CD4-positive, alpha-beta memory T cell (primary cell): ENCODE measurements at regions of chr15 and their contacts with region 1.

Region 1: GRCh38 chr15:63188926-63189871 is at the start of gene RAB8B:
- DNase-seq: peak; percentile 92 to 96 (median 93)
- H3K4me3 ChIP-seq: peak within 1 kb of the TSS; percentile 75 to 80
- H3K4me3 Mint-ChIP-seq: peak within 1 kb of the TSS; percentile 95 to 99 (median 98)
- H3K27ac ChIP-seq: peak within 1 kb of the TSS; percentile 93
- H3K27ac Mint-ChIP-seq: peak within 1 kb of the TSS; percentile 87 to 100 (median 98)
- H3K4me1 ChIP-seq: peaks cover 44% of the 10 kb centered on the region
- H3K4me1 Mint-ChIP-seq: peaks cover 37 to 56% (median 44%) of the 10 kb centered on the region in 4 donors
- H3K27me3 ChIP-seq: no peaks in the 10 kb centered on the region
- H3K27me3 Mint-ChIP-seq: no peaks in the 10 kb centered on the region
- total RNA-seq, gene RAB8B: 86.0 to 86.4 TPM

Region 2: GRCh38 chr15:63121382-63122001 is 67.7 kb before region 1 on chr15 and contains the start of gene LACTB:
- CTCF ChIA-PET with region 1: no interaction called
- POLR2A ChIA-PET with region 1: no interaction called
- intact Hi-C with region 1: loop called (anchors 1 kb)
- DNase-seq: peak; percentile 73 to 79 (median 77)
- H3K4me3 ChIP-seq: peak within 1 kb of the TSS; percentile 69 to 76
- H3K4me3 Mint-ChIP-seq: peak within 1 kb of the TSS; percentile 87 to 98 (median 93)
- H3K27ac ChIP-seq: peak within 1 kb of the TSS; percentile 67
- H3K27ac Mint-ChIP-seq: peak within 1 kb of the TSS; percentile 84 to 96 (median 94)
- H3K4me1 ChIP-seq: peaks cover 10% of the 10 kb centered on the region
- H3K4me1 Mint-ChIP-seq: peaks cover 7 to 28% (median 14%) of the 10 kb centered on the region in 4 donors
- H3K27me3 ChIP-seq: no peaks in the 10 kb centered on the region
- H3K27me3 Mint-ChIP-seq: no peaks in the 10 kb centered on the region
- total RNA-seq, gene LACTB: 11.7 to 12.1 TPM

Region 3: GRCh38 chr15:63166219-63166618 is 23.0 kb before region 1 on chr15:
- CTCF ChIA-PET with region 1: interaction called, 26 read pairs
- POLR2A ChIA-PET with region 1: interaction called, 16 read pairs
- intact Hi-C with region 1: no loop called
- DNase-seq: peak in 1 of 5 donors; percentile 6
- H3K4me3 ChIP-seq: no peak overlapping the region
- H3K4me3 Mint-ChIP-seq: no peak overlapping the region
- H3K27ac ChIP-seq: no peak overlapping the region
- H3K27ac Mint-ChIP-seq: no peak overlapping the region
- H3K4me1 ChIP-seq: no peaks in the 10 kb centered on the region
- H3K4me1 Mint-ChIP-seq: peaks cover 0 to 5% (median 3%) of the 10 kb centered on the region in 4 donors
- H3K27me3 ChIP-seq: no peaks in the 10 kb centered on the region
- H3K27me3 Mint-ChIP-seq: no peaks in the 10 kb centered on the region

Region 4: DNA sequence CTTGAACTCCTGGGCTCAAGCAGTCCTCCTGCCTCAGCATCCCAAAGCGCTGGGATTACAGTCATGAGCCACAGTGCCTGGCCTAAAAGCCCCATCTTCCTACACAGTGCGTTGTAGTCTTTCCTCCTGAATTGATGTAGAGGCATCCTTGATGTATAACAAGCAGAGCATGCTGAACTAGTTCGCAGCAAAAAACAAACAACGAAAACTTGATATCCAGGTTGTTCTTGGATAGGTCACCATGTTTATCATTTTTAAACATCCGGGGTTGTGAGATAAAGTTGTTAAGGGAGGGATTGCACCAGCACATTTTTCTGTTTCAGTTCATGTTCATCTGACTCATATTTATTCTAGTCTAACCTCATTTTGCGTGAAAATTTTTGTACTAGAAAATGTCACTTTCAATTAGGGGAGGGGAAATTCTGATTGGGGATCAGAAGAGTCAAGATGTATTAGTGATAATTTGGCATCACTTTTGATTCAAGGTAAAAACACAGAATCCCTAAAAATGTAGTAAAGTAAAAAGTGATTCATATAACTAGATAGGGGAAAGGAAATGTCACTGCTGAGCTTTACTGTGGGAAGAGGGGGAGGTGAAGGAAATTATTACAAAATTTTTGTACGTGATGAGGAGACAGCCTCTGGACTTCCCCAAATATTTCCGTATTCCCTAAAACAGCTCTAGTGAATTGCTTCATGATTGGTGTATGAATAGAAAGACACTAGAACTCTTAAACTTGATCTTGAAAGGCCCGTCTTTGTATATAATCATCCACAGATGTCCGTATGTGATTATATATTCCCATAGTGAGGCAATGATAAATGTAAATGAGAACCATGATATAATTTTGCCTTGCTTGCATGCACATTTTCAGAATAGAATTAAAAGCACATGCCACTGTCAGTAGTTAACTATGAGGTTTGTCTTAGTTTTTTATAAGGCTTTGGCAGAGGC is 23.1 kb after region 1 on chr15:
- CTCF ChIA-PET with region 1: interaction called, 9 read pairs
- POLR2A ChIA-PET with region 1: interaction called, 59 read pairs
- intact Hi-C with region 1: loop called (anchors 1 kb)
- DNase-seq: peak in 3 of 5 donors; percentile 24 to 38 (median 33)
- H3K4me3 ChIP-seq: no peak overlapping the region
- H3K4me3 Mint-ChIP-seq: peak overlapping the region; percentile 29 to 87 (median 72)
- H3K27ac ChIP-seq: peak overlapping the region; percentile 26
- H3K27ac Mint-ChIP-seq: peak overlapping the region; percentile 67 to 92 (median 88)
- H3K4me1 ChIP-seq: peaks cover 78% of the 10 kb centered on the region
- H3K4me1 Mint-ChIP-seq: peaks cover 59 to 82% (median 69%) of the 10 kb centered on the region in 4 donors
- H3K27me3 ChIP-seq: no peaks in the 10 kb centered on the region
- H3K27me3 Mint-ChIP-seq: no peaks in the 10 kb centered on the region

Region 5: GRCh38 chr15:63246691-63247464 is 57.7 kb after region 1 on chr15:
- CTCF ChIA-PET with region 1: interaction called, 10 read pairs
- POLR2A ChIA-PET with region 1: interaction called, 21 read pairs
- intact Hi-C with region 1: loop called (anchors 2 kb)
- DNase-seq: no peak
- H3K4me3 ChIP-seq: no peak overlapping the region
- H3K4me3 Mint-ChIP-seq: peak overlapping the region in 1 of 8 donors; percentile 25
- H3K27ac ChIP-seq: no peak overlapping the region
- H3K27ac Mint-ChIP-seq: peak overlapping the region in 6 of 7 donors; percentile 22 to 73 (median 63)
- H3K4me1 ChIP-seq: peaks cover 26% of the 10 kb centered on the region
- H3K4me1 Mint-ChIP-seq: peaks cover 36 to 67% (median 48%) of the 10 kb centered on the region in 4 donors
- H3K27me3 ChIP-seq: no peaks in the 10 kb centered on the region
- H3K27me3 Mint-ChIP-seq: no peaks in the 10 kb centered on the region

Region 6: GRCh38 chr15:63402498-63403253 is 213.5 kb after region 1 on chr15:
- CTCF ChIA-PET with region 1: interaction called, 8 read pairs
- POLR2A ChIA-PET with region 1: no interaction called
- intact Hi-C with region 1: loop called (anchors 10 kb)
- DNase-seq: peak in 4 of 5 donors; percentile 34 to 44 (median 40)
- H3K4me3 ChIP-seq: no peak overlapping the region
- H3K4me3 Mint-ChIP-seq: no peak overlapping the region
- H3K27ac ChIP-seq: no peak overlapping the region
- H3K27ac Mint-ChIP-seq: no peak overlapping the region
- H3K4me1 ChIP-seq: no peaks in the 10 kb centered on the region
- H3K4me1 Mint-ChIP-seq: peaks cover 0 to 4% (median 2%) of the 10 kb centered on the region in 4 donors
- H3K27me3 ChIP-seq: no peaks in the 10 kb centered on the region
- H3K27me3 Mint-ChIP-seq: peaks cover 3 to 8% of the 10 kb centered on the region in 2 donors